ENCODE measurements at regions of chr11 and their contacts with region 1.

Region 1: DNA sequence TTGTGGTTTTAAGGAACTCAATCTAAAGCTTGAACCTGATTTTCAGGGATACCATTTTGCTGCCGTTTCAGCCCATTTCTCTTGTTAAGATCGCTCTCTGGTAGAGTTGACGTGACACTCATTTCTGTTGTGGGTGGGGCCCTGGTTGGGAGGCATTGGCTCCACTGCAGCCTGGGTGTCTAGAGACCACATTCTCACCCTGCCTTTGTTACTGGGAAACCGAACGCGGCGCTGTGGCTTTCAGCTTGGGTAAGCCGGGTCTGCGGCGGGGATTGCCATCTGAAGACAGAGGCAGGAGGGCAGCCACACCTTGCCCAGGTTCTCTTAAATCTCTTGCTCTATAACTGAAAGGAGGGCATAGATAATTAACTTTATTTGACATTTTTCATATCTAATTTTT is 3.2 kb downstream of the EHF start:
- DNase-seq: no peak
- ATAC-seq: no peak
- H3K4me3 ChIP-seq: no peak overlapping the region
- H3K27ac ChIP-seq: no peak overlapping the region
- H3K4me1 ChIP-seq: peaks cover 0 to 6% (median 0%) of the 10 kb centered on the region in 9 donors
- H3K27me3 ChIP-seq: peaks cover 0 to 3% (median 0%) of the 10 kb centered on the region in 7 donors
- CTCF ChIP-seq: no peak

Region 2: DNA sequence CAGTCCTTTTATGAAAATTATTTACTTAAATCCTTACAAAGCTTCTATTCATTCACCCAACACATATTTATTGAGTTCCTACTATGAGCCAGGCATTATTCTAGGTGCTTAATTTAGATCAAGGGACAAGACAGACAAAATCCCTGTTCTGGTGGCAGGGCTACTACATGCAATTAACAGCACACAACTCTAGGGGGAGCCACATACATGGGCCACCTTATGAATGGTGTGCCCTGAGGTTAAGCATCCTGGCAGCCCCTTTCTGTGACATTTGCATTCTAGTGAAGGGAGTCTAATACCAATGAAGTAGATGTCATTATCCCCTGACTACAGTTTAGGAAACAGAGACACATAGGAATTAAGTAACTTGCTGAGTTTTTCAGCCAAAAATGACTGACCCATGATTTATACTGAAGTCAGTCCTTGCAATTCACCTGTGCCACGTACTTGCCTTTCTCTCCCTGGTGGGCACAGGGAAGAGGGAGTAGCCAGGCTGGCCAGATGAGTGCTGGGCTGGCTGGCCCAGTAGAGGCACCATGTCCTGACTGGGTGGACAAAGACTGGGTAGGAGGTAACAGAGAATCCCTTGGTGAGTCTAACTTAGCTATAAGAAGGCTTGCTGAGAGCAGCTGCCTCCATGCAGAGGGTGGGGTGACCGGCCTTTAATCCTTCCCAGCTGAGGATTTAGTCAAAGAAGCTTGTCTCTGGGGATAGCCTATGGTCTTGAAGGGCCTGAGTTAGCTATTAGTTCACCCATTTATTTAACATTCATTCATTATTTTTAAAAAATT is 58.5 kb before region 1 on chr11:
- intact Hi-C with region 1: loop called in 1 of 10 experiments (anchors 10 kb)
- DNase-seq: no peak
- ATAC-seq: no peak
- H3K4me3 ChIP-seq: no peak overlapping the region
- H3K27ac ChIP-seq: no peak overlapping the region
- H3K4me1 ChIP-seq: peaks cover 0 to 3% (median 0%) of the 10 kb centered on the region in 9 donors
- H3K27me3 ChIP-seq: peaks cover 0 to 27% (median 8%) of the 10 kb centered on the region in 7 donors
- CTCF ChIP-seq: peak in 3 of 9 donors; percentile 3 to 35 (median 14)

Region 3: GRCh38 chr11:34599406-34599901 is 24.6 kb before region 1 on chr11:
- intact Hi-C with region 1: no loop called
- DNase-seq: no peak
- ATAC-seq: no peak
- H3K4me3 ChIP-seq: no peak overlapping the region
- H3K27ac ChIP-seq: no peak overlapping the region
- H3K4me1 ChIP-seq: peaks cover 0 to 23% (median 17%) of the 10 kb centered on the region in 9 donors
- H3K27me3 ChIP-seq: no peaks in the 10 kb centered on the region
- CTCF ChIP-seq: no peak

Measured in heart right ventricle (tissue), 16 donors.